ENCODE measurements at regions of chr9 and their contacts with region 1.

Region 1: GRCh38 chr9:130847327-130848217 is 12.5 kb downstream of the ABL1 start:
- DNase-seq: peak; percentile 87 to 90
- ATAC-seq: peak; percentile 79 to 81
- H3K4me3 ChIP-seq: peak overlapping the region; percentile 35; the same call in 2 of the 3 replicates
- H3K27ac ChIP-seq: peak overlapping the region; percentile 91 to 93
- H3K4me1 ChIP-seq: peaks cover 72% of the 10 kb centered on the region
- CTCF ChIP-seq: peak; percentile 19; the same call in 1 of the 3 replicates
- EP300 ChIP-seq: peak; percentile 50 to 74; a peak in 3 of 5 replicates
- POLR2A ChIP-seq: no peak
- RAD21 ChIP-seq: 0 out of 5 replicates have a peak, but pooled peaks of 1 of the 2 experiments have one; percentile 6

Region 2: GRCh38 chr9:130626249-130626992 is 221.2 kb before region 1 on chr9:
- CTCF ChIA-PET with region 1: no interaction called
- POLR2A ChIA-PET with region 1: no interaction called
- DNase-seq: peak in 1 of 2 experiments; percentile 32
- ATAC-seq: peak; percentile 49 to 61; a peak in 4 of 6 replicates
- H3K4me3 ChIP-seq: no peak overlapping the region
- H3K27ac ChIP-seq: no peak overlapping the region
- H3K4me1 ChIP-seq: no peaks in the 10 kb centered on the region
- CTCF ChIP-seq: no peak
- EP300 ChIP-seq: no peak
- POLR2A ChIP-seq: no peak
- RAD21 ChIP-seq: no peak

Region 3: DNA sequence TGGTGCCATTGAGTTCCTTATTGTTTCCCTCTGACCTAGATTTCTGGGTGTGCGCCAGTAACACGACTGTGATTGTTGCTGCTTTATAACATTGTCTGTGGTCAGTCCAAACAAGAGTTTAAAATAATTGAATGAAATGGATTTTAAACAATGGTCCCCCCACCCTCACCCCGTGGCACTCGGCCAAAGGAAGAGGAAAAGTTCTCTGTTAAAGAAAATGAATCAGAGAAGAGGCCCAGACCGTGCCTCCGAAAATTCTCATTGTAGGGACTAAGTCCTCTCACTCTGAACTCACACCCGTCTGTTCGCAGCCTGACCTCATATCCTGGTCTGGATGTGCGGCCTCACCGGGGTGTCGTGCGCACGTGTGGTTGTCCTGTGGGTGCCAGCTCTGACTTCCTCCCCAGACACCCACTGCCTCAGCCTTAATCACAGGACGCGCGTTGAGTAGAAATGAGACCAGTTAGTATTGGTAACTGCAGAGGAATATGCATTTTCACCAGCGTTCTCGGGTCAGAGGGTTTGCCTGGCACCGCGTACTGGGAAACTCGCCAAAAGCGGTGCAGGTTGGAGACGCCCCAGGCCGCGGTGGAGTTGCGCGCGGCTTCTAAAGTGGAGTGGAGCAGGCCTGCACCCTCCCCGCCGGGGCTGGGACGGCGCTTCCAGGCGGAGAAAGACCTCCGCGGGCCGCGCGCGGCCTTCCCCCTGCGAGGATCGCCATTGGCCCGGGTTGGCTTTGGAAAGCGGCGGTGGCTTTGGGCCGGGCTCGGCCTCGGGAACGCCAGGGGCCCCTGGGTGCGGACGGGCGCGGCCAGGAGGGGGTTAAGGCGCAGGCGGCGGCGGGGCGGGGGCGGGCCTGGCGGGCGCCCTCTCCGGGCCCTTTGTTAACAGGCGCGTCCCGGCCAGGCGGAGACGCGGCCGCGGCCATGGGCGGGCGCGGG is 12.9 kb before region 1 on chr9 and contains the start of gene ABL1:
- CTCF ChIA-PET with region 1: interaction called, 7 read pairs
- POLR2A ChIA-PET with region 1: interaction called, 10 read pairs
- DNase-seq: peak; percentile 82 to 85
- ATAC-seq: peak; percentile 84 to 92
- H3K4me3 ChIP-seq: peak within 1 kb of the TSS; percentile 63
- H3K27ac ChIP-seq: peak within 1 kb of the TSS; percentile 94 to 98
- H3K4me1 ChIP-seq: peaks cover 43% of the 10 kb centered on the region
- CTCF ChIP-seq: no peak; the same call in 2 of the 3 replicates
- EP300 ChIP-seq: no peak
- POLR2A ChIP-seq: peak; percentile 15
- RAD21 ChIP-seq: no peak; a peak in 1 of 5 replicates
- polyA plus RNA-seq, gene ABL1: 26.5 and 37.5 TPM in 2 replicates

Region 4: GRCh38 chr9:130901498-130902203 is 54.1 kb after region 1 on chr9:
- CTCF ChIA-PET with region 1: no interaction called
- POLR2A ChIA-PET with region 1: no interaction called
- DNase-seq: no peak
- ATAC-seq: peak in 1 of 2 experiments; percentile 9; a peak in 1 of 6 replicates
- H3K4me3 ChIP-seq: no peak overlapping the region
- H3K27ac ChIP-seq: no peak overlapping the region
- H3K4me1 ChIP-seq: no peaks in the 10 kb centered on the region
- CTCF ChIP-seq: no peak
- EP300 ChIP-seq: no peak
- POLR2A ChIP-seq: no peak
- RAD21 ChIP-seq: no peak

Measured in A549 (cell line).